ENCODE measurements at regions of chr17 and their contacts with region 1.

Region 1: GRCh38 chr17:50055426-50056230 is at the start of gene ITGA3:
- DNase-seq: peak in 1 of 2 donors; percentile 93
- H3K4me3 ChIP-seq: peak within 1 kb of the TSS; percentile 73 to 83
- H3K27ac ChIP-seq: peak within 1 kb of the TSS; percentile 95 to 97
- H3K4me1 ChIP-seq: peaks cover 32 to 47% of the 10 kb centered on the region in 2 donors
- H3K27me3 ChIP-seq: no peaks in the 10 kb centered on the region
- CTCF ChIP-seq: peak in 1 of 3 experiments; percentile 29
- total RNA-seq, gene ITGA3: 222 TPM

Region 2: GRCh38 chr17:50079334-50080095 is 23.9 kb after region 1 on chr17:
- intact Hi-C with region 1: loop called (anchors 2 kb)
- DNase-seq: no peak
- H3K4me3 ChIP-seq: no peak overlapping the region
- H3K27ac ChIP-seq: peak overlapping the region; percentile 60 to 68
- H3K4me1 ChIP-seq: peaks cover 0 to 7% of the 10 kb centered on the region in 2 donors
- H3K27me3 ChIP-seq: no peaks in the 10 kb centered on the region
- CTCF ChIP-seq: peak; percentile 68 to 84 (median 82)